Adrenal gland (tissue), 19 donors: ENCODE measurements at regions of chr15 and their contacts with region 1.

Region 1: DNA sequence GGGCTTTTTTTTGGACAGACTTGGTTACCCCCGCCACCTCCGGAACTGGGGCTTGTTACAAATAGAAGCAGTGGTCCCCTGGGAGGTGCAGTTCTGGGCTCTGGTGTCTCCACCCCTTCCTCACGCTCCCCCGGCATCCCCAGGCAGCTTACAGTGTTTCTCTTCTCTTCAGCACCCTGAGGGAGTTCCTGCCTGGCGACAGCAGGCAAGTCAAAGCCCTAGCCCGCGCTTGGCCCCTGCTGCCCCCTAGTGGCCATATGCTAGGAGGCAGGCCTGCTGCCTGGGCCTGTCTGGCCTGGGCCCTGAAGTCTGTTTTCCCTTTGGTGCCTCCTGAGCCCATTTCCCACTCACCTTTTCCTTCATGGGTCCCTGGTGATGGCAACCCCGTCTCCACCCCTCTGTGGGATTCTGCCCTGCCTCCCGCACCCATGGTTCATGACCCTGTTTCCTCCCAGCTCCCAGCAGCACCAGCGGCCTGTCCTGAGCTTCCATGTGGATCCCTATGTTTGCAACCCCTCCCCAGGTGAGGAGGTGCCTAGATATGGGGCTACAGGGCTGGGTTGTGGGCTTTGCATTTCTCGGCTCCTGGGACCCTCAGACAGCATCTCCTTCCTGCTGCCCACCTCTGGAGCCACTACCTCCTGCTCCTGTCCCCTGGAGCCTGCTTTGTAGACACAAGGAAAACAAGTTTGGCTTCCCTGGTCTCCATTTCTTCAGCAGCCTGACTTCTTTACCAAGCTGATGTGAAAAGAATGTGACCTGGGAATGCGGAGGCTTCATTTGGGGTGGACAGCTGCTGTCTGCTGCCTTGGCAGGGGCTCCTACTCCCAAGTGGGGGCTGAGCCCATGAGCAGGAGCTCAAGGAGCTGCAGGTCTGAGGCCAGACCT is 2.2 kb downstream of the SNX22 start:
- DNase-seq: peak; percentile 90 to 95 (median 92)
- H3K4me3 ChIP-seq: no peak overlapping the region
- H3K27ac ChIP-seq: peak overlapping the region in 2 of 5 donors; percentile 6 to 52
- H3K4me1 ChIP-seq: peaks cover 16 to 31% of the 10 kb centered on the region in 2 donors
- H3K27me3 ChIP-seq: no peaks in the 10 kb centered on the region
- CTCF ChIP-seq: peak; percentile 93 to 98 (median 97)
- POLR2A ChIP-seq: no peak

Region 2: DNA sequence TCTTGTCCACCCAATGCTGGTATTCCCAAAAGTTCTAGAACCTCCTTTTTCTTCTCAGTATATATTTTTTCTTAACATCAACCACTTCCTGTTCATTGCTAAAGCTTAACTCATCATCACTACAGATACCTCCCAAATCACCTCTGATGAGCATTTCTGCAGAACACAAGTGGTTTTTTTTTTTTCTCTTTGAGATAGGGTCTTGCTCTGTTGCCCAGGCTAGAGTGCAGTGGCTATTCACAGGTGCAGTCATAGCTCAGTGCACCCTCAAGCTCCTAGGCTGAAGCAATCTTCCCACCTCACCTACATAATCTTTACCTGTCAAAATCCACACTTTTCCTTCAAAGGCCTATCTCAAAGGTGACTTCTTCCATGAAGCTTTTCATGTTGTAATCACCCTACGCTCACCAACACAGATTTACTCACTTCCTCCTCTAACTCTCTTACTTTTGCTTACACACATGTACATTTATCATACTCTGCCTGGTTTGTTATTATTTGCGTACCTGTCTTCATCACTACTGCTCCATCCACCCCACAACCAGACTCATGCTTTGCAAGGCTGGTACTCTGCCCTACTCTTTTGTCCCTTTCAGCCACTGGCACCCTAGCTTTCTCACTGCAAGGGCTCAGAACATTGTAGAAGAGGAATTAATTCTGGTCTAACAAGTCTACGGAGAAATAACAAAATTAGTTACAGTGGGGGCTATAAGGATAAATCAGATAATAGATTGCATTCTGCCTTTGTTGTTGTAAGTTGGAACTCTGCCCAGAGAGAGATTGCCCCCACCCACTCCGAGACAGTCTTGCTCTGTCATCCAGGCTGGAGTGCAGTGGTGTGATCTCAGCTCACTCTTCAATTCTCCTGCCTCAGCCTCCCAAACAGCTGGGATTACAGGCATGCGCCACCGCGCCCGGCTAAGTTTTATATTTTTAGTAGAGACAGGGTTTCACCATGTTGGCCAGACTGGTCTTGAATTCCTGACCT is 347.4 kb before region 1 on chr15:
- intact Hi-C with region 1: no loop called
- DNase-seq: no peak
- H3K4me3 ChIP-seq: no peak overlapping the region
- H3K27ac ChIP-seq: no peak overlapping the region
- H3K4me1 ChIP-seq: peaks cover 6 to 33% of the 10 kb centered on the region in 2 donors
- H3K27me3 ChIP-seq: no peaks in the 10 kb centered on the region
- CTCF ChIP-seq: no peak
- POLR2A ChIP-seq: no peak

Region 3: GRCh38 chr15:64089543-64090280 is 64.0 kb before region 1 on chr15:
- intact Hi-C with region 1: loop called in 1 of 2 experiments (anchors 10 kb)
- DNase-seq: no peak
- H3K4me3 ChIP-seq: no peak overlapping the region
- H3K27ac ChIP-seq: peak overlapping the region; percentile 9 to 63 (median 48)
- H3K4me1 ChIP-seq: peaks cover 20 to 49% of the 10 kb centered on the region in 2 donors
- H3K27me3 ChIP-seq: no peaks in the 10 kb centered on the region
- CTCF ChIP-seq: no peak
- POLR2A ChIP-seq: no peak

Region 4: DNA sequence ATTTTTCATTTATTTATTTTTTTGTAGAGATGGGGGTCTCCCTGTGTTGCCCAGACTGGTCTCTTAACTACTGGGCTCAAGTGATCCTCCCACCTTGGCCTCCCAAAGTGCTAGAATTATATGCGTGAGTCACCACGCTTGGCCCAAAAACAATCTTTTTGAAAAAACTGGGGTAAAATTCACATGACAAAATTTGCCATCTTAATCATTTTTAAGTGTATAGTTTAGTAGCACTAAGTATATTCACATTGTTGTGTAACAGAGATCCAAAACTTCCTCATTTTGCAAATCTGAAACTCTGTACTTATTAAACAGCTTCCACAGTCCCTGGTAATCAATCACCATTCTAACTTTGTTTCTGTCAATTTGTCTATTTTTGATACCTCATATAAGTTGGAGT is 52.8 kb before region 1 on chr15:
- intact Hi-C with region 1: loop called in 1 of 2 experiments (anchors 5 kb)
- DNase-seq: no peak
- H3K4me3 ChIP-seq: no peak overlapping the region
- H3K27ac ChIP-seq: peak overlapping the region in 2 of 5 donors; percentile 0 to 38
- H3K4me1 ChIP-seq: peaks cover 42 to 70% of the 10 kb centered on the region in 2 donors
- H3K27me3 ChIP-seq: no peaks in the 10 kb centered on the region
- CTCF ChIP-seq: no peak
- POLR2A ChIP-seq: no peak

Region 5: DNA sequence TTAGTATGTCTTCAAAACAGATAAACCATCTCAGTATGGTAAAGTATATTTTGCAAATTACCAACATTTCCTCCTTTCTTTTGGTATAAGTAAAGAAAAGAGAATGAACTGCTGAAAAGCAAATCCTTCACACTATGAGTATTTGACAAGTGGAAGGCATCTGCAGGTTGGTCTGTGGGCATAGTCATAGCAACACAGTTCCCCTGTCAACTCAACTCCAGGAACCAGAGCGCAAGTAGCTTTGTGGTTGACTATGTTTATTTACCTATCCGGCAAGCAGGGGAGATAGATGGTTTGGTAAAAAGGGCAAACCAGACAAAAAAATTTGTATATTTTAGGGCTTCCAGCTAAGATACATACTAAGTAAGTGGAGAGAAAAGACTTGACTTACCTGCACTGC is 97.4 kb after region 1 on chr15:
- intact Hi-C with region 1: no loop called
- DNase-seq: no peak
- H3K4me3 ChIP-seq: no peak overlapping the region
- H3K27ac ChIP-seq: no peak overlapping the region
- H3K4me1 ChIP-seq: peaks cover 13 to 18% of the 10 kb centered on the region in 2 donors
- H3K27me3 ChIP-seq: no peaks in the 10 kb centered on the region
- CTCF ChIP-seq: no peak
- POLR2A ChIP-seq: no peak